Ovary (tissue), 10 donors: ENCODE measurements at regions of chr10 and their contacts with region 1.

Region 1: DNA sequence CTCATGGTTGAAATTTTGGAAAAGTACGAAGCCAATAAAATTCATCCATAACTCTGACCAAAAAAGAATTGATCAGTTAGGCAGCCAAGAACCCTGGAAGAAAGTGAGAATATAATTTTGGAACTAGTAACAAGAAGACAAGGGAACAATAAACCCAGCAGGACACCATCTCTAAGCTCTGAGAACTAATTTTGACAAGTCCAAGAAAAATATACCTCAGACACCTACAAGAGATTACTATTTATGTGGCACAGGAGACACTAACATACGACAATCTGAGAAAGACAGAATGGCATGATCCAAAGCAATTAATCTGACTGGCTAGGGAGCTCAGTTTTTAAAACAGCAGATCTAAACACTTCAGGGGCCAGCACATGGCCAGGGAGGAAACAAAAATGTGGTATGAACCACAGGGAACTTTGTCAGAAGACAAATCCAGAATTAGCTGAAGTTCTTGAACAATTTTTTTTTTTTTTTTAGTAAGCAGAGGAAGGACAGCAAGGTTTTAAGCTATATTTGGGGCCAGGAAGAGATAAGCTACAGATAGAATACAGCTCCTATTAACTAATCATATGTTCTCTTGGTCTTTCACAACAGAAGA is 38.9 kb downstream of the PARD3 start:
- DNase-seq: no peak
- H3K4me3 ChIP-seq: no peak overlapping the region
- H3K27ac ChIP-seq: no peak overlapping the region
- H3K4me1 ChIP-seq: peaks cover 18% of the 10 kb centered on the region
- H3K27me3 ChIP-seq: no peaks in the 10 kb centered on the region
- CTCF ChIP-seq: no peak
- EP300 ChIP-seq: no peak
- POLR2A ChIP-seq: no peak

Region 2: GRCh38 chr10:34280599-34281374 is 495.4 kb before region 1 on chr10:
- intact Hi-C with region 1: no loop called
- DNase-seq: peak; percentile 36 to 81 (median 52)
- H3K4me3 ChIP-seq: no peak overlapping the region
- H3K27ac ChIP-seq: peak overlapping the region; percentile 49 to 63
- H3K4me1 ChIP-seq: peaks cover 5% of the 10 kb centered on the region
- H3K27me3 ChIP-seq: no peaks in the 10 kb centered on the region
- CTCF ChIP-seq: peak in 1 of 3 donors; percentile 44
- EP300 ChIP-seq: peak; percentile 71
- POLR2A ChIP-seq: no peak

Region 3: GRCh38 chr10:34615770-34616169 is 160.4 kb before region 1 on chr10:
- intact Hi-C with region 1: no loop called
- DNase-seq: no peak
- H3K4me3 ChIP-seq: no peak overlapping the region
- H3K27ac ChIP-seq: no peak overlapping the region
- H3K4me1 ChIP-seq: peaks cover 1% of the 10 kb centered on the region
- H3K27me3 ChIP-seq: no peaks in the 10 kb centered on the region
- CTCF ChIP-seq: no peak
- EP300 ChIP-seq: no peak
- POLR2A ChIP-seq: no peak

Region 4: GRCh38 chr10:34739915-34740314 is 36.3 kb before region 1 on chr10:
- intact Hi-C with region 1: loop called in 1 of 4 experiments (anchors 5 kb)
- DNase-seq: peak; percentile 76 to 84 (median 76)
- H3K4me3 ChIP-seq: no peak overlapping the region
- H3K27ac ChIP-seq: peak overlapping the region in 1 of 2 donors; percentile 75
- H3K4me1 ChIP-seq: peaks cover 17% of the 10 kb centered on the region
- H3K27me3 ChIP-seq: no peaks in the 10 kb centered on the region
- CTCF ChIP-seq: no peak
- EP300 ChIP-seq: no peak
- POLR2A ChIP-seq: no peak